ENCODE measurements at regions of chr11 and their contacts with region 1.

Region 1: DNA sequence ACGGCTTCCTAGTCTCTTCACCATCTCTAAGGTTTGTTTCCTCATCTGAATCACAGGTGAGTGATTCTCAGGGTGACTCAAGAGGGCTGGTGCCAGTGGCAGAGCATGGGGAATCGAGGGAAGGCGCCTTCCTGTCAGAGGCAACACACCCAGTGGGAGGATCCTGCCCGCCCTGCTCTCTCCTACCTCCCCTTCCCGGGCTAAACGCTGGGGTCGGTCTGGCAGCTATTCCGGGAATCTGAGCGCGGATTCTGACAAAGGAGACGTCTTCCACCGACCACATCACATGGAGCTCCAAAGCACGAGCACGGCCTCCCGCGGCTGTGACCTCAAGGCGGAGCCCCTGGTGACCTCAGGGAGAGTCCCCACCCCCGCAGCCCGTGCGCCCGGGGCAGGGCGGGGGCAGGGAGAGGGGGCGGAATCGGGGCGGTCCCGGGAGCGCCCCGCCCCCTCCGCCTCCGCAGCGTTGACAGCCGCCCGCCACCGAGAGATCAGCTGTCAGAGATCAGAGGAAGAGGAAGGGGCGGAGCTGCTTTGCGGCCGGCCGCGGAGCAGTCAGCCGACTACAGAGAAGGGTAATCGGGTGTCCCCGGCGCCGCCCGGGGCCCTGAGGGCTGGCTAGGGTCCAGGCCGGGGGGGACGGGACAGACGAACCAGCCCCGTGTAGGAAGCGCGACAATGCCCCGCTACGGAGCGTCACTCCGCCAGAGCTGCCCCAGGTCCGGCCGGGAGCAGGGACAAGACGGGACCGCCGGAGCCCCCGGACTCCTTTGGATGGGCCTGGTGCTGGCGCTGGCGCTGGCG is at the start of gene SMPD1:
- DNase-seq: peak; percentile 89
- H3K4me3 Mint-ChIP-seq: peak within 1 kb of the TSS; percentile 86
- H3K27ac Mint-ChIP-seq: peak within 1 kb of the TSS; percentile 98
- H3K4me1 Mint-ChIP-seq: peaks cover 20% of the 10 kb centered on the region
- H3K27me3 Mint-ChIP-seq: peaks cover 7% of the 10 kb centered on the region
- total RNA-seq, gene SMPD1: 8.5 and 9.4 TPM in 2 replicates

Region 2: DNA sequence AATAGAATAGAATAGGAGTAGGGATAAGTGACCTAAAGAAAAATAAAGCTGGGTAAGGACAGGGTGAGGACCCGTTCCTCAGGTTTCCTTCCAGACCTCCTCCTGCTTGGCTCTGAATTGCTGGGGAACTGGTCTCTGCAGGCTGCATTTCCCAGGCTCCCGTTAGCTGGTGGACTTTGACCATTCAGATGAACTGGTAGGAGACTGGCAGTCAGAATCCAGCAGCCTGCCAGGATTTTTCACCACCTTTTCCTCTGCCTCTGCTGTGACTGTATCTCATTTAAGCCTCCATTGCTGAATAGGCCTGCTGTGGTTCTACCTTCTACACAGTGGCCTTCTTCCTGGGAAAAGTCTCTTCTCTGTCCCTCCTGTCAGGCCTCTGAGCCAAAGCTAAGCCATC is 24.5 kb before region 1 on chr11:
- intact Hi-C with region 1: no loop called
- DNase-seq: no peak
- H3K4me3 Mint-ChIP-seq: no peak overlapping the region
- H3K27ac Mint-ChIP-seq: no peak overlapping the region
- H3K4me1 Mint-ChIP-seq: no peaks in the 10 kb centered on the region
- H3K27me3 Mint-ChIP-seq: no peaks in the 10 kb centered on the region

Region 3: GRCh38 chr11:6419009-6419631 is 29.0 kb after region 1 on chr11 and contains the start of gene APBB1:
- intact Hi-C with region 1: loop called (anchors 1 kb)
- DNase-seq: peak; percentile 63
- H3K4me3 Mint-ChIP-seq: peak within 1 kb of the TSS; percentile 77
- H3K27ac Mint-ChIP-seq: no peak within 1 kb of the TSS
- H3K4me1 Mint-ChIP-seq: no peaks in the 10 kb centered on the region
- H3K27me3 Mint-ChIP-seq: peaks cover 32% of the 10 kb centered on the region
- total RNA-seq, gene APBB1: 16.5 and 16.8 TPM in 2 replicates

Region 4: DNA sequence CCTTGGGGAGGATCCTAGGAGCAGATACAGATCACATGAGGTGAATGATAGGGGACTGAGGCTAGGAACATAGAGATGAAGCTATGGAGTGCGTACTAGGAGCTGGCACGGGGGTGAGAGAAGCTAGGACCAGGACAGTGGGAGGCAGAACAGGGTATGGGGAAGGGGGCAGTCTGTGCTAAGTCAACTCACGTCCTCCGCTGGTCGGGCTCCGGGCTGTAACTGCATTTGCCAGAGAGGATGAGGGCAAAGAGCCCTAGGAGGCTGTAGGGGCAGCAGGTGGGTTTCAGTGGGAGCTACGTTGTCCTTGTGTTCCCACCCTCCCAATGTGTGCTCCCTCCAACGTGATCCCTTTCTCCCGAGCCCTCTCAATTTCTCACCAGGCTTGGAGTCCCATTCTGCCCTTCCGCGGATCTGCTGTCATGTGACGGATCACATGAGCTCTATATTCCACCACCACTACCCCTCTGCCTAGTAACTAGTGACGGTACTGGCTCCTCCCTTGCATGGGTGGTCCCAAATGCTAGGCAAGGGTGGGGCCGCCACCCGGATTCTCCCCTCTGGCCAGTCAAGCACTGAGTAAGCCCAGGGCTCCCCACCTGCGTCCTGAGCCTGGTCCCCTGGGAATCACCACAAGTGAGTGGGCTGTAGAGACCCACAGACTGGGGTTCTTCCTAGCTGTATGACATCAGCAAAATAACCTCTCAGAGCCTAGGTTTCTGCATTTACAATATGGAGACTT is 229.1 kb after region 1 on chr11 and contains the start of gene TPP1:
- intact Hi-C with region 1: loop called (anchors 2 kb)
- DNase-seq: peak; percentile 89
- H3K4me3 Mint-ChIP-seq: no peak within 1 kb of the TSS
- H3K27ac Mint-ChIP-seq: no peak within 1 kb of the TSS
- H3K4me1 Mint-ChIP-seq: no peaks in the 10 kb centered on the region
- H3K27me3 Mint-ChIP-seq: no peaks in the 10 kb centered on the region
- total RNA-seq, gene TPP1: 38.4 and 40.3 TPM in 2 replicates

Measured in activated T-helper 1 cell treated with anti-CD3 and anti-CD28 coated beads, Interleukin-12 subunit alpha, Interleukin-12 subunit beta, Interleukin-2, Interleukin-4 antibody, amounts not matched to agents 30 ng/mL and 10 ng/mL and 1 ng/mL, durations not matched to agents 14 hours and 24 hours and 36 hours (primary cell).